Psoas muscle (tissue), 8 donors: ENCODE measurements at regions of chr7 and their contacts with region 1.

Region 1: DNA sequence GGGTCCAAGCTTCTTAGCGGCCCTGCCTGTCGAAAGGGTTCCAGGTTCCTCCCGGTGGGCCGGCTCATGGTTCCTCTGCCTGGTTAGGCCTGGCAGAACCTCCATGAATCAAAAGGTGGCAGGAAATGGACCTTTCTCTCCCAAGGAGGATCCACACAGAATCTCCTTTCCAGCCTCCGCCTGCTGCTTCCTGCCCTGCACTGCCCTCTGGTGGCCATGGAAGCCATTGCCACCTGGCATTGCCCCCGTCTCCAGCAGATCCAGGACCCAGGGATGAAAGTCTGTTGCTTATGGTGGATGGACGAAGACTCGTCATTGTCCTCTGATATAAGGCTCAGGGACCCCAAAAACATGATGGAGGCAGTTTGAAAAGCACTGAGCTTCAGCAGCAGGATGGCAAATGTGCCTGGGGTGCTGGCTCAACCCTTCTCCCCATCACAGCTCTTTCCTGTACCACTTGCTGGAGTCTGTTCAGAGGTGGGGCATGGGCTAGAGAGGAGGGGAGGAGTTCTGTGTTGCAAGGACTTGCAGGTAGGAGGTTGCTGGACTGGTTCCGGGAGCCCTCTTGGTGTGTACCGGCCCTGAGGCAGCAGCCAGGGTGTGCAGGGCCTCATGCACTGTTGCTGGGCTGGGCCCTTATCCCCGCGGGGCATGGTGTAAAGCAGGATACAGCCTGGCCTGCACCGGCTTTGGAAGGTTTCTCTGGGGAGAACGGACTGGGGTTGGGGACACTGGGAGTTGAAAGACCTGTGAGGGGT is 11.3 kb upstream of the INMT start:
- DNase-seq: peak; percentile 81 to 88
- ATAC-seq: peak; percentile 80 to 94 (median 88)
- H3K4me3 ChIP-seq: no peak overlapping the region
- H3K27ac ChIP-seq: no peak overlapping the region
- H3K4me1 ChIP-seq: no peaks in the 10 kb centered on the region
- H3K27me3 ChIP-seq: no peaks in the 10 kb centered on the region
- CTCF ChIP-seq: peak; percentile 99

Region 2: GRCh38 chr7:30379131-30379530 is 361.5 kb before region 1 on chr7:
- intact Hi-C with region 1: no loop called
- DNase-seq: no peak
- ATAC-seq: no peak
- H3K4me3 ChIP-seq: no peak overlapping the region
- H3K27ac ChIP-seq: no peak overlapping the region
- H3K4me1 ChIP-seq: no peaks in the 10 kb centered on the region
- H3K27me3 ChIP-seq: no peaks in the 10 kb centered on the region
- CTCF ChIP-seq: no peak

Region 3: DNA sequence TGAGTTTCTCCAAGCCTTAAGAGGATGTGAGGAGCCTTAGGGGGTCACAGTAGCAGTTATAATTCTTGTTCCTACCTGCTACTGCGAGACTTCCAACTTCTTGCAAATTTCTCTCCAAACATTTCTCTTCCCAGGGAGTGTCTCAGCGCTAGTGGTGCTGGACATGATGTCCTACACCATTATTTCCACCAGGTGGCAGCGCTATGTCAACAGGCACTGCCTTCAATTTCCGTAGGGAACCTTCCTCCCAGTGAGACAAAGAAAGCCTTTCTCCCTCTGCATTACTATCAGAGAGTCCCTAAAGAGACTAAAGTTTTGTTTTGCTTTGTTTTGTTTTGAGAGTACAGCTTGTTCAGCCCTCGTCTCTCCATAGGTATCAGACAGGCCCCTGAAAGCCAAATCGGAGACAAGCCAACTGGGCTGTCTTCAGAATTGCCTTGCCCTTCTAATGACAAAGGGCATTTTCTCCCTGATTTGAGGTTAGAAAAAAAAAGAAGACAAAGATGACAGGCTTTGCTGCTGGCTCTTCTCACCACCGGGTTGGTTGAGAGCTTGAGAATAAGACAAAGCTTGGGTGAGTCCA is 191.8 kb before region 1 on chr7:
- intact Hi-C with region 1: loop called in 1 of 2 experiments (anchors 5 kb)
- DNase-seq: peak in 1 of 2 donors; percentile 51
- ATAC-seq: peak; percentile 75 to 83 (median 81)
- H3K4me3 ChIP-seq: no peak overlapping the region
- H3K27ac ChIP-seq: peak overlapping the region; percentile 37
- H3K4me1 ChIP-seq: peaks cover 10% of the 10 kb centered on the region
- H3K27me3 ChIP-seq: no peaks in the 10 kb centered on the region
- CTCF ChIP-seq: peak; percentile 88

Region 4: GRCh38 chr7:30625283-30625682 is 115.3 kb before region 1 on chr7:
- intact Hi-C with region 1: loop called in 1 of 2 experiments (anchors 2 kb)
- DNase-seq: no peak
- ATAC-seq: no peak
- H3K4me3 ChIP-seq: no peak overlapping the region
- H3K27ac ChIP-seq: no peak overlapping the region
- H3K4me1 ChIP-seq: no peaks in the 10 kb centered on the region
- H3K27me3 ChIP-seq: no peaks in the 10 kb centered on the region
- CTCF ChIP-seq: peak; percentile 35

Region 5: DNA sequence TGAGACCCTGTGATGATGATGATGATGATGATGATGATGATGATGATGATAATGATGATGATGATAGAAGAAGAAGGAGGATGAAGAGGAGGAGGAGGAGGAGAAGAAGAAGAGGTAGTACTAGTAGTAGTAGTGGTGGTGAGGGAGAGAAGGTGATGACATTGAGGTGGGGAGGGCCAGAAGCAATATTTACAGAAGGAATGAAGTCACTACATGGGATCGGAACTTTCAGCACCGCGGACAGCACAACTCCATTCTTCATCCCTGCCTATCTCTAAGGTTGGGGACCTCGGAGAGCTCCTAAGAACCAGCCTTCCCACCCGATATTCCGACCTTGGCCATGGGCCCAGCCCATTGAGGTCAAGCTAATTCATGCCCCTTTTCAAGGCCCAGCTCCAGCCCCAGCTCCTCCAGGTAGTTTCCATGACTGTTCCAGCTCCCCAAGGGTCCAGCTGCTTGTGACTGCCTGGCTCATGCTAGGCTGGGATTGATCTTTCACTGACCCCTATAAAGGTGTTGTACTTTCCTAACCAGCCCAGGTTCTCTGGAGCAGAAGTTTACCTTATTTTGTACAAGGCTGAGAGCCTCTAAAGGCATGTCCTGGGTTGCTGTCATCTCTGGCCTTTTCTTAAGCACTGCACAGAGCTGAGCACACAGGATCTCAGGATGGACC is 68.7 kb before region 1 on chr7:
- intact Hi-C with region 1: no loop called
- DNase-seq: no peak
- ATAC-seq: peak in 1 of 4 donors; percentile 39
- H3K4me3 ChIP-seq: no peak overlapping the region
- H3K27ac ChIP-seq: no peak overlapping the region
- H3K4me1 ChIP-seq: no peaks in the 10 kb centered on the region
- H3K27me3 ChIP-seq: no peaks in the 10 kb centered on the region
- CTCF ChIP-seq: no peak

Region 6: GRCh38 chr7:30682212-30683083 is 58.2 kb before region 1 on chr7 and contains the start of gene CRHR2:
- intact Hi-C with region 1: loop called (anchors 2 to 5 kb)
- DNase-seq: peak in 1 of 2 donors; percentile 26
- ATAC-seq: peak; percentile 67 to 88 (median 76)
- H3K4me3 ChIP-seq: peak within 1 kb of the TSS; percentile 65
- H3K27ac ChIP-seq: no peak within 1 kb of the TSS
- H3K4me1 ChIP-seq: peaks cover 21% of the 10 kb centered on the region
- H3K27me3 ChIP-seq: peaks cover 0 to 21% (median 2%) of the 10 kb centered on the region in 3 donors
- CTCF ChIP-seq: peak; percentile 54
- total RNA-seq, gene CRHR2: 0.34 to 1.3 (median 0.42) TPM

Region 7: DNA sequence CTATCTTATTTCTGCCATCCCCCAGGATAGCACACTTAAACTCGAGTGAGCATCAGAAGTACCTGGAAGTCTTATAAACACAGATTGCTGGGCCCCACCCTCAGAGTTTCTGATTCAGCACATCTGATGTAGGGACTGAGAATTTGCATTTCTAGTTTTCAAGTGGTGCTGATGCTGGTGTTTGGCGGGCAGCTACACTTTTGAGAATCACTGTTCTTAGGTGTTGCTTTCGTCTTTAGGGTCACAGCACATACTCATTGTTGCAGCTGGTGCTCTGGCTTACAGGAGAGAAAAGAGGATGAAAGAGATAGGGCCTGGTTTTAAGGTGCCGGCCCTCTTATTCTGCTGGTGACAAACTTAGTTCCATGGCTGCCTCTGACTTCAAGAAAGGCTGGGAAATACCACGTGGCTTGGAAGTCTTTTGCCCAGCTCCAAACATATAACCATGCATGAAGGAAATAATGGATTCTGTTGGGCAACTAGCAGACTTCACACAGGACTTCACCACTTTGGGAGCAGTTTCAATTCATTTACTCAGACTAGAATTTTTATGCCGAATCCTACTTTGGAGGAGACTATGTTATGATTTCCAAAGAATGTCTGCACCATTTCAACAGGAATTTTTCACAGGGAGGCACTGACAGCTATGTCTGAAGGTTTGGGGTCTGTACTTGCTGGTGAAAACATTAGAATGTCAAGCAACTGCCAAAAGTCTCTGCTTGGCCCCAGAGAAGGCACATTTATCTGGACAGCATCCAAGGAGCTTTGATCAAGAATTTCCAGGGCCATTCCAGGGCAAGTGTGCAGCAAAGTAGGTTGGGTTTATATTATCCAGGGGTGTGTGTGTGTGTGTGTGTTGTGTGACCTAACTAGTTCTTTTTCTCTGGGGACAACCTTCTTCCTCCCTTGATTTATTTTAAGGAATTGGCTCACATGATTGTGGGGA is 23.7 kb after region 1 on chr7:
- intact Hi-C with region 1: no loop called
- DNase-seq: no peak
- ATAC-seq: peak; percentile 16 to 79 (median 45)
- H3K4me3 ChIP-seq: no peak overlapping the region
- H3K27ac ChIP-seq: no peak overlapping the region
- H3K4me1 ChIP-seq: peaks cover 18% of the 10 kb centered on the region
- H3K27me3 ChIP-seq: no peaks in the 10 kb centered on the region
- CTCF ChIP-seq: no peak

Region 8: GRCh38 chr7:31033674-31034300 is 293.2 kb after region 1 on chr7:
- intact Hi-C with region 1: no loop called
- DNase-seq: no peak
- ATAC-seq: peak in 1 of 4 donors; percentile 56
- H3K4me3 ChIP-seq: no peak overlapping the region
- H3K27ac ChIP-seq: no peak overlapping the region
- H3K4me1 ChIP-seq: no peaks in the 10 kb centered on the region
- H3K27me3 ChIP-seq: no peaks in the 10 kb centered on the region
- CTCF ChIP-seq: no peak